ENCODE measurements at regions of chr2 and their contacts with region 1.

Region 1: GRCh38 chr2:218257390-218257981 is 3.3 kb upstream of the GPBAR1 start:
- DNase-seq: peak; percentile 80
- ATAC-seq: peak; percentile 84
- H3K4me3 Mint-ChIP-seq: no peak overlapping the region
- H3K27ac Mint-ChIP-seq: peak overlapping the region; percentile 87
- H3K4me1 Mint-ChIP-seq: peaks cover 27% of the 10 kb centered on the region
- H3K27me3 Mint-ChIP-seq: no peaks in the 10 kb centered on the region
- CTCF ChIP-seq: peak; percentile 62

Region 2: GRCh38 chr2:218186355-218186766 is 71.1 kb before region 1 on chr2:
- CTCF ChIA-PET with region 1: interaction called, 27 read pairs
- POLR2A ChIA-PET with region 1: interaction called, 4 read pairs
- intact Hi-C with region 1: loop called (anchors 5 kb)
- DNase-seq: peak; percentile 89
- ATAC-seq: peak; percentile 98
- H3K4me3 Mint-ChIP-seq: no peak overlapping the region
- H3K27ac Mint-ChIP-seq: peak overlapping the region; percentile 55
- H3K4me1 Mint-ChIP-seq: peaks cover 9% of the 10 kb centered on the region
- H3K27me3 Mint-ChIP-seq: no peaks in the 10 kb centered on the region
- CTCF ChIP-seq: peak; percentile 86

Region 3: DNA sequence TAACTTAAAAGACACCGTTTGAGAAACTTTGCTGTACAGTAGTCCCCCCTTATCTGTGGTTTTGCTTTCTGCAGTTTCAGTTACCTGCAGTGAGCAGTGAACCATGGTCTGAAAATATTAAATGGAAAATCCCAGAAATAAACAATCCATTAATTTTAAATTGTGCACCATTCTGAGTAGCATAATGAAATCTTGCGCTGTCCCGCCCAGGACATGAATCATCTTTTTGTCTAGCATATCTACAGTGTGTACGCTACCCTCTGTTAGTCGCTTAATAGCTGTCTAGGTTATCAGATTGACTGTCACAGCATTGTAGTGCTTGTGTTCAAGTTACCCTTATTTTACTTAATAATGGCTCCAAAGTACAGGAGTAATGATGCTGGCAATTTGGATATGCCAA is 34.4 kb before region 1 on chr2:
- CTCF ChIA-PET with region 1: interaction called, 41 read pairs
- POLR2A ChIA-PET with region 1: interaction called, 9 read pairs
- intact Hi-C with region 1: loop called (anchors 5 kb)
- DNase-seq: peak; percentile 46
- ATAC-seq: peak; percentile 63
- H3K4me3 Mint-ChIP-seq: peak overlapping the region; percentile 93
- H3K27ac Mint-ChIP-seq: peak overlapping the region; percentile 88
- H3K4me1 Mint-ChIP-seq: peaks cover 75% of the 10 kb centered on the region
- H3K27me3 Mint-ChIP-seq: no peaks in the 10 kb centered on the region
- CTCF ChIP-seq: no peak

Region 4: GRCh38 chr2:218245214-218245613 is 12.3 kb before region 1 on chr2:
- CTCF ChIA-PET with region 1: interaction called, 16 read pairs
- POLR2A ChIA-PET with region 1: interaction called, 31 read pairs
- intact Hi-C with region 1: no loop called
- DNase-seq: peak; percentile 57
- ATAC-seq: peak; percentile 77
- H3K4me3 Mint-ChIP-seq: no peak overlapping the region
- H3K27ac Mint-ChIP-seq: peak overlapping the region; percentile 85
- H3K4me1 Mint-ChIP-seq: peaks cover 55% of the 10 kb centered on the region
- H3K27me3 Mint-ChIP-seq: no peaks in the 10 kb centered on the region
- CTCF ChIP-seq: no peak

Region 5: DNA sequence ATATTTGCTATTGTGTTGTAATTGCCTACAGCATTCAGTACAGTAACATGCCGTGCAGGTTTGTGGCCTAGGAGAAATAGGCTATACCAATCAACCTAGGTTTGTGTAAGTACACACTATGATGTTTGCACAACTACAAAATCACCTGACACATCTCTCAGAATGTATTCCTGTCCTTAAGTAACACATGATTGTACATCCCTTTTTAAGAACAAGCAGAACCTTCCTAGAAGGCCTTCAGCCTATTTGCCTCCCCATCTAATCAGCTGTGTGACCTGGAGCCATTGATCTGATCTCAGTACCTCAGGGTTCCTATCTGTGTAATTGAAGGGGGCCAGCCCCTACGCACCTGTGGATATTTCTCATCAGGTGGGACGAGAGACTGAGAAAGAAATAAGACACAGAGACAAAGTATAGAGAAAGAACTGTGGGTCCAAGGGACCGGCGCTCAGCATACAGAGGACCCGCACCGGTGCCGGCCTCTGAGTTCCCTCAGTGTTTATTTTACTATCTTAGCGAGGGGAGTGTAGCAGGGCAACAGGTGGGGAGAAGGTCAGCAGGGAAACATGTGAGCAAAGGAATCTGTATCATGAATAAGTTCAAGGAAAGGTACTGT is 53.5 kb after region 1 on chr2:
- CTCF ChIA-PET with region 1: no interaction called
- POLR2A ChIA-PET with region 1: no interaction called
- intact Hi-C with region 1: no loop called
- DNase-seq: no peak
- ATAC-seq: no peak
- H3K4me3 Mint-ChIP-seq: no peak overlapping the region
- H3K27ac Mint-ChIP-seq: no peak overlapping the region
- H3K4me1 Mint-ChIP-seq: peaks cover 9% of the 10 kb centered on the region
- H3K27me3 Mint-ChIP-seq: no peaks in the 10 kb centered on the region
- CTCF ChIP-seq: no peak

Measured in activated CD8-positive, alpha-beta T cell treated with anti-CD3 and anti-CD28 coated beads for 36 hours (primary cell).